SK-N-SH (cell line): ENCODE measurements at regions of chr12 and their contacts with region 1.

Region 1: GRCh38 chr12:53352331-53353256 is 16.4 kb upstream of the SP7 start:
- DNase-seq: peak; percentile 80
- H3K4me3 ChIP-seq: no peak overlapping the region; a peak in 1 of 4 replicates
- H3K27ac ChIP-seq: no peak overlapping the region
- H3K4me1 ChIP-seq: no peaks in the 10 kb centered on the region
- H3K27me3 ChIP-seq: no peaks in the 10 kb centered on the region
- CTCF ChIP-seq: peak; percentile 85
- EP300 ChIP-seq: no peak
- RAD21 ChIP-seq: peak; percentile 96

Region 2: GRCh38 chr12:53054112-53054833 is 298.3 kb before region 1 on chr12:
- CTCF ChIA-PET with region 1: no interaction called
- POLR2A ChIA-PET with region 1: no interaction called
- DNase-seq: peak; percentile 97
- H3K4me3 ChIP-seq: peak overlapping the region; percentile 66
- H3K27ac ChIP-seq: peak overlapping the region; percentile 35 to 78; a peak in 3 of 4 replicates
- H3K4me1 ChIP-seq: peaks cover 25 to 46% of the 10 kb centered on the region in 2 experiments
- H3K27me3 ChIP-seq: no peaks in the 10 kb centered on the region
- CTCF ChIP-seq: no peak
- EP300 ChIP-seq: no peak
- RAD21 ChIP-seq: no peak

Region 3: DNA sequence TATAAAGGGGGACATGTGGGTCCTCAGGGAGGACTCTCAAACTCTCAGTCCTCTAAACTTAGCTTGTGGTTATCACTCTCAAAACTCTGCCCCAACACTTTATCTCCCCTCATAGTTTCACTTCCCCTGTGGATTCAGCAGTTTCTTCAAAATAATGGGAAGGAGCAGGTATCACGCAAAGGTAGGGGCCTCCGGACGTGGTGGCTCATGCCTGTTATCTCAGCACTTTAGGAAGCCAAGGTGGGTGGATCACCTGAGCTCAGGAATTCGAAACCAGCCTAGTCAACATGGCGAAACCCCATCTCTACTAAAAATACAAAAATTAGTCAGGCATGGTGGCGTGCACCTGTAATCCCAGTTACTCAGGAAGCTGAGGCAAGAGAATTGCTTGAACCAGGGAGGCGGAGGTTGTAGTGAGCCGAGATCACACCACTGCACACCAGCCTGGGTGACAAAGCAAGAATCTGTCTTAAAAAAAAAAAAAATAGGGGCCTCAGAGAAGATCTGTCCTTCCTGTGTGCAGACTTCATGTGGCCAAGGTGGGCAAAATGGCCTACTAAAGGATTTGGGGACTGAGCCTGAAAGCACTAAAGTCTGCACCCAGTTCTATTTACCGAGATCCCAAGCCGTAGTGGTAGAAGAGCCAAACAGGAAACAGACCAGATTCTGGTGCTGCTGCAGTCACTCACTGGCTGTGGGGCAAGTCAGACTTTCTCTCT is 152.0 kb before region 1 on chr12:
- CTCF ChIA-PET with region 1: no interaction called
- POLR2A ChIA-PET with region 1: no interaction called
- DNase-seq: no peak
- H3K4me3 ChIP-seq: no peak overlapping the region
- H3K27ac ChIP-seq: peak overlapping the region in 1 of 2 experiments; percentile 46; a peak in 1 of 4 replicates
- H3K4me1 ChIP-seq: no peaks in the 10 kb centered on the region
- H3K27me3 ChIP-seq: no peaks in the 10 kb centered on the region
- CTCF ChIP-seq: no peak
- EP300 ChIP-seq: no peak
- RAD21 ChIP-seq: no peak

Region 4: DNA sequence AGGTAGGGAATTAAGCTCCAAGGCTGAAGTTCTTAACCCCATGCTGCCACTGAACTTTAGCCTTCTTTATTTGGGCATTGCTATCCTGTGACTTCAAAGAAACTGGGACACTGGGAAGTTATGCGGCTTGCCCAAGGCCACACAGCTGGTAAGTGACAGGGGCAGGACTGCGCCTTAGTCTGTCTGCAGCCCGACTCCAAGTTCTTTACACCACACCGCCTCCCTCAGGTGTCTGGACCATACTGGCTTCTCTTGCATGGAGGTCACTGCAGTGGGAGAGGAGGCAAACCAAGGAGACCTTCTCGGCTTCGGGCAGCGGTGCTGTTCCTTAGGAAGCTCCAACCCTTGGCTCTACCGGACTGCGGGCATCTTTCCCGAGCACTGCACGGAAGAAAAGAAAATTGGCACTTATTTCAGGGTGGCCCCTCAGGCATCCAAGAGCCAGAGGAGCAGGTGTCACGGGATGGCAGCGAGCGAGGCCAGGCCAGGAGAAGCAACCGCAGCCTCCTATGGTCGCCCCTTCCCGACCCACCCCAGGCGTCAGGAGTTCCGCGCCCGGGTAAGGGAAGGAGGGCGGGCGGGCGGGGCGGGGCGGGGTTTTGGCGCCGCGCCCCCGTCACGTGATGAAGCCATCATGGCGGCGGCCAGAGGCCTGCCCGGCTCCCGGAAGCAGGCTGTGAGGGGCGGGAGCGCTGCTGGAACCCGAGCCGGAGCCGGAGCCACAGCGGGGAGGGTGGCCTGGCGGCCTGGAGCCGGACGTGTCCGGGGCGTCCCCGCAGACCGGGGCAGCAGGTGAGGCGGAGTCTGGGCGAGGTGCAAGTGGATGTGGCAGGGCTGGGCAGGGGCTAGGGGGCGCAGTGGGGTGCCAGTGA is 100.9 kb before region 1 on chr12:
- CTCF ChIA-PET with region 1: no interaction called
- POLR2A ChIA-PET with region 1: no interaction called
- DNase-seq: peak; percentile 97
- H3K4me3 ChIP-seq: peak overlapping the region; percentile 66 to 91
- H3K27ac ChIP-seq: peak overlapping the region; percentile 57 to 84; a peak in 3 of 4 replicates
- H3K4me1 ChIP-seq: peaks cover 0 to 16% of the 10 kb centered on the region in 2 experiments; a peak in 1 of 4 replicates
- H3K27me3 ChIP-seq: no peaks in the 10 kb centered on the region
- CTCF ChIP-seq: peak; percentile 59
- EP300 ChIP-seq: no peak
- RAD21 ChIP-seq: peak; percentile 81

Region 5: DNA sequence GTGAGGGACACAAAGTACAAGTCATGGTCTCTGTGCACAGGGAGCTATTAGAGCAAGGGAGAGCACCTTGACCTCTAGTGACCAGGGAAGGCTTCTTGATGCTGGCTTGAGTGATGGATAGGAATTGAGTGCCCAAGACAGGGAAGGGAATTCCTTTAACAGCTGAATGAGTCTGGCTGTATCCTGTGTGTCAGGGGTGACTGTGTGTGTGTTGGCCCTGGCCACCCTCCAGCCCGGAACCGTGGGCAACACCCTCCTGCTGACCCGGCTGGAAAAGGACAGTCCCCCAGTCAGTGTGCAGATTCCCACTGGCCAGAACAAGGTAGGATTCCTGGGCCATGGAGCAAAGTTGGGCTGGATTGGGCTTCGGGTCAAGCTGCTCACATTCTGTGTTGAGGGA is 62.7 kb before region 1 on chr12:
- CTCF ChIA-PET with region 1: no interaction called
- POLR2A ChIA-PET with region 1: no interaction called
- DNase-seq: no peak
- H3K4me3 ChIP-seq: no peak overlapping the region
- H3K27ac ChIP-seq: peak overlapping the region in 1 of 2 experiments; percentile 87; a peak in 2 of 4 replicates
- H3K4me1 ChIP-seq: peaks cover 3 to 19% of the 10 kb centered on the region in 2 experiments; a peak in 2 of 4 replicates
- H3K27me3 ChIP-seq: no peaks in the 10 kb centered on the region
- CTCF ChIP-seq: no peak
- EP300 ChIP-seq: no peak
- RAD21 ChIP-seq: no peak

Region 6: GRCh38 chr12:53327435-53328042 is 25.1 kb before region 1 on chr12:
- CTCF ChIA-PET with region 1: interaction called, 294 read pairs
- POLR2A ChIA-PET with region 1: no interaction called
- DNase-seq: peak; percentile 55
- H3K4me3 ChIP-seq: peak overlapping the region in 1 of 2 experiments; percentile 20; a peak in 1 of 4 replicates
- H3K27ac ChIP-seq: no peak overlapping the region
- H3K4me1 ChIP-seq: peaks cover 0 to 10% of the 10 kb centered on the region in 2 experiments; a peak in 1 of 4 replicates
- H3K27me3 ChIP-seq: no peaks in the 10 kb centered on the region; the same call in 1 of the 2 replicates
- CTCF ChIP-seq: peak; percentile 61
- EP300 ChIP-seq: no peak
- RAD21 ChIP-seq: peak; percentile 52

Region 7: GRCh38 chr12:53379389-53380103 is 27.0 kb after region 1 on chr12:
- CTCF ChIA-PET with region 1: interaction called, 31 read pairs
- POLR2A ChIA-PET with region 1: no interaction called
- DNase-seq: peak; percentile 91
- H3K4me3 ChIP-seq: peak overlapping the region; percentile 52 to 59
- H3K27ac ChIP-seq: peak overlapping the region; percentile 89 to 96
- H3K4me1 ChIP-seq: peaks cover 29 to 32% of the 10 kb centered on the region in 2 experiments
- H3K27me3 ChIP-seq: no peaks in the 10 kb centered on the region
- CTCF ChIP-seq: no peak
- EP300 ChIP-seq: no peak
- RAD21 ChIP-seq: no peak

Region 8: GRCh38 chr12:53414756-53415417 is 62.3 kb after region 1 on chr12:
- CTCF ChIA-PET with region 1: interaction called, 236 read pairs
- POLR2A ChIA-PET with region 1: interaction called, 3 read pairs
- DNase-seq: peak; percentile 58
- H3K4me3 ChIP-seq: no peak overlapping the region
- H3K27ac ChIP-seq: peak overlapping the region; percentile 73 to 99
- H3K4me1 ChIP-seq: peaks cover 45 to 47% of the 10 kb centered on the region in 2 experiments
- H3K27me3 ChIP-seq: no peaks in the 10 kb centered on the region
- CTCF ChIP-seq: no peak
- EP300 ChIP-seq: peak in 1 of 2 experiments; percentile 77; a peak in 2 of 4 replicates
- RAD21 ChIP-seq: no peak

Region 9: DNA sequence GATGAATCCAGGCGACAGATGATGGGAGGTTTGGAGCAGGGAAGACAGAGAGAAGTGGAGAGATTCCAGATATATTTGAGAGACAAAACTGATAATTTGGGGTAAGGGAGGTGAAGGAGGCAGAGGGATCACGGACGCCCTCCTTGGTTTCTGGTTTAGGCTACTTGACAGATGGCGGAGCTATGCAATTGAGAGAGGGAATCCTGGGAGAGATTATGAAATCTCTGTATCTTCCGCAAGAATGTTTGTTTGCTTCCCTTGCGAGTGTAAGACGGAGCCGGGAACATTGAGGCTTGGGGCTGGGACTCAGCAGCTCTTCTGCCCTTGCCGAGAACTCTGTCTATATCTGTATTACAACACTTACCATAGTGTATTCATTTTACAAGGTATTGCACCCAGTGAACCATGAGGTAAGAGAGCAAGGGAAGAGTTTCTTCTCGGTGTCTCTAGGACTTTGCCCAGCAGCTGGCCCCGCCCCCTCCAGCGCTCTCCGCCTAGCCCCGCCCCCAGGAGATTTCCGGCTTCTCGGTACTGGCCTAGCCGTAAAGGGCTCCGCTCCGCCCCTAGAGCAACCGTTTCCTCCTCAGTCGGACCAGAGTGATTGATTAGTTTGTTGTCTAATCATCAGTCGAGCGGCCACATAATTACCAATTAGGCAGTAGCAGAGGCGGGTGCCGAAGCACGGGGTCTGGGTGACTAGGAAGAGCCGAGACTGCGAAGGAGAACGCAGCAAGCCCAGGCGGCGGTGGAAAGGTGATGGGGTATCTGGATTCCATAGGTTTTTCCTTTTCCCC is 88.6 kb after region 1 on chr12 and contains the start of gene PRR13:
- CTCF ChIA-PET with region 1: interaction called, 14 read pairs
- POLR2A ChIA-PET with region 1: no interaction called
- DNase-seq: peak; percentile 93
- H3K4me3 ChIP-seq: peak within 1 kb of the TSS; percentile 65 to 72
- H3K27ac ChIP-seq: peak within 1 kb of the TSS; percentile 89 to 92
- H3K4me1 ChIP-seq: peaks cover 0 to 7% of the 10 kb centered on the region in 2 experiments; a peak in 1 of 4 replicates
- H3K27me3 ChIP-seq: no peaks in the 10 kb centered on the region
- CTCF ChIP-seq: no peak
- EP300 ChIP-seq: no peak
- RAD21 ChIP-seq: no peak
- polyA plus RNA-seq, gene PRR13: 58.5 and 59.3 TPM in 2 replicates

Region 10: DNA sequence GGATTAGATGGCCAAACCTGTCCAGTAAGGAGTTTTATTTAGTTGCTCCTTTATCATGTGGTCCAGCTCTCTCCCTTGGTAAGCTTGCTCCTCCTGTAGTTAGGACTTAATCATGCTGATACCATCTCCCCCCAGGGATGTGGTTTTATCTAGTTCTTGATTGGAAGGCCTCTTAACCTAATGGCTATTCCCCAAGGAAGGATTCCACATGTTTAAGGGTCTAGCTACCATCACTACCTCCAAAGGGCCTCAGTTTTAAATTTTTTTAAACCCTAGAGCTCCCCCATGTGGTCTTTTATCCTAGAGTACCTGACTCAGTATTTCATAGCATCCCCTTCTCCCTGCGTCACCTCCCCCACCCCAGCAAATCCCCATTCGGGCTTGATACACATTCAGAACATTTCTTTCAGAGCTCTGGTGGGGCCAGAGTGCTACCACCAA is 124.2 kb after region 1 on chr12:
- CTCF ChIA-PET with region 1: interaction called, 32 read pairs
- POLR2A ChIA-PET with region 1: interaction called, 3 read pairs
- DNase-seq: peak; percentile 67
- H3K4me3 ChIP-seq: no peak overlapping the region
- H3K27ac ChIP-seq: peak overlapping the region; percentile 7 to 21; a peak in 3 of 4 replicates
- H3K4me1 ChIP-seq: peaks cover 2 to 5% of the 10 kb centered on the region in 2 experiments; a peak in 2 of 4 replicates
- H3K27me3 ChIP-seq: no peaks in the 10 kb centered on the region
- CTCF ChIP-seq: peak; percentile 58
- EP300 ChIP-seq: no peak
- RAD21 ChIP-seq: peak; percentile 34; the same call in 1 of the 2 replicates

Region 11: DNA sequence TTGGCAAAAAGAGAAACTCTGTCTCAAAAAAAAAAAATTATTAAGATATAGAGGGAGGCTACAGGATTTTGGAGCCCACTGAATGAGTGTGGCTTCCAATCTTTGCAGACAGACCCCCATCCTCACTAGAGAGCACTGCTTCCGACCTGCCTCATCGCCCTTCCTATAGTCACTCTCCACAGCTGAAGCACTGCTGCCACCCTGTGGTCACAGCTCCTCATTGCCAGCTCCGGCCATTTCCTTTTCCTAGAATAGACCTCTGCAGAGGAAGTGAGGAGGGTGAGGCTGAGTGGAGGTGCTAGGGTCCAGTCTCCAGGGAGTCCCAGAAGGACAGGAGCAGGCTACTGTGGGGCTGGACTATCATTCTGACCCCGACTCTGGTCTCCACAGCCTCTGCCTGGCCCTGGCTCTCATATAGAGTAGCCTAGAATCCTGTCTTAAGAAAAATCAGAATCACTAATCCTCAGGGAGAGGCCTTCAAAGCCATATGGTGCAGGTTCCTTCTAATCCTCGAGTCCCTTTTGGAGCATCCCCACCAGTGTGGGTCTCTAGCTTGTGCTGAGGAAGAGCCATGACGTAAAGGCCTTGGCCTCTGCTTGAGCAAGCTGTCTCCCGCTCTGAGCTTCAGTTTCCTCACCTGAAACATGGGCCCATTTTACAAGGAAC is 156.1 kb after region 1 on chr12:
- CTCF ChIA-PET with region 1: interaction called, 23 read pairs
- POLR2A ChIA-PET with region 1: interaction called, 3 read pairs
- DNase-seq: peak; percentile 84
- H3K4me3 ChIP-seq: peak overlapping the region in 1 of 2 experiments; percentile 21; a peak in 1 of 4 replicates
- H3K27ac ChIP-seq: peak overlapping the region in 1 of 2 experiments; percentile 31; a peak in 1 of 4 replicates
- H3K4me1 ChIP-seq: peaks cover 0 to 12% of the 10 kb centered on the region in 2 experiments; a peak in 3 of 4 replicates
- H3K27me3 ChIP-seq: no peaks in the 10 kb centered on the region
- CTCF ChIP-seq: peak; percentile 93
- EP300 ChIP-seq: no peak
- RAD21 ChIP-seq: peak; percentile 97